ENCODE measurements at regions of chr6 and their contacts with region 1.

Region 1: GRCh38 chr6:73285674-73286283 is 22.8 kb upstream of the KHDC1 start:
- DNase-seq: no peak
- H3K4me3 ChIP-seq: no peak overlapping the region
- H3K27ac ChIP-seq: no peak overlapping the region
- H3K4me1 ChIP-seq: no peaks in the 10 kb centered on the region
- H3K27me3 ChIP-seq: no peaks in the 10 kb centered on the region
- CTCF ChIP-seq: peak in 1 of 4 experiments; percentile 11
- EP300 ChIP-seq: no peak
- POLR2A ChIP-seq: no peak

Region 2: DNA sequence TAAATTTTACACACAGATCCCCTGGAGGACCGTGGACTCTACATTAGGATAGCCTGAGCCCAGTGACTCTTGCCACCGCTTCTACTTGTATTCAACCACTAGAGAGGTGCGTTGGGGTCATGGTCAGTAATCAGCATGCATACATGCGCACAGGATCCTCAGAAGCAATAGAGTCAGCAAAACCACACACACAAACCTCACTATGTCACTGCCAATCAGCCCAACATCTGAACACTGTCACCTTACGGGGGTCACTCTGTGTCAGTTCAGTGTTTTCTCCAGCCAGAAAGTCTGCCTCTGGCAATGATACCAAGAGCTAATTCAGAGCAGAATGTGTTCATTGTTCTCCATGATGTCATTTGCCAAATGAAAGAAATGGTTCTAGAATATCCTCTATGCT is 285.8 kb before region 1 on chr6:
- intact Hi-C with region 1: no loop called
- DNase-seq: no peak
- H3K4me3 ChIP-seq: no peak overlapping the region
- H3K27ac ChIP-seq: no peak overlapping the region
- H3K4me1 ChIP-seq: no peaks in the 10 kb centered on the region
- H3K27me3 ChIP-seq: no peaks in the 10 kb centered on the region
- CTCF ChIP-seq: no peak
- EP300 ChIP-seq: no peak
- POLR2A ChIP-seq: no peak

Region 3: GRCh38 chr6:73325656-73326055 is 39.9 kb after region 1 on chr6:
- intact Hi-C with region 1: loop called (anchors 1 kb)
- DNase-seq: no peak
- H3K4me3 ChIP-seq: no peak overlapping the region
- H3K27ac ChIP-seq: no peak overlapping the region
- H3K4me1 ChIP-seq: no peaks in the 10 kb centered on the region
- H3K27me3 ChIP-seq: no peaks in the 10 kb centered on the region
- CTCF ChIP-seq: no peak
- EP300 ChIP-seq: no peak
- POLR2A ChIP-seq: no peak